HepG2 (cell line): ENCODE measurements at regions of chr1 and their contacts with region 1.

Region 1: DNA sequence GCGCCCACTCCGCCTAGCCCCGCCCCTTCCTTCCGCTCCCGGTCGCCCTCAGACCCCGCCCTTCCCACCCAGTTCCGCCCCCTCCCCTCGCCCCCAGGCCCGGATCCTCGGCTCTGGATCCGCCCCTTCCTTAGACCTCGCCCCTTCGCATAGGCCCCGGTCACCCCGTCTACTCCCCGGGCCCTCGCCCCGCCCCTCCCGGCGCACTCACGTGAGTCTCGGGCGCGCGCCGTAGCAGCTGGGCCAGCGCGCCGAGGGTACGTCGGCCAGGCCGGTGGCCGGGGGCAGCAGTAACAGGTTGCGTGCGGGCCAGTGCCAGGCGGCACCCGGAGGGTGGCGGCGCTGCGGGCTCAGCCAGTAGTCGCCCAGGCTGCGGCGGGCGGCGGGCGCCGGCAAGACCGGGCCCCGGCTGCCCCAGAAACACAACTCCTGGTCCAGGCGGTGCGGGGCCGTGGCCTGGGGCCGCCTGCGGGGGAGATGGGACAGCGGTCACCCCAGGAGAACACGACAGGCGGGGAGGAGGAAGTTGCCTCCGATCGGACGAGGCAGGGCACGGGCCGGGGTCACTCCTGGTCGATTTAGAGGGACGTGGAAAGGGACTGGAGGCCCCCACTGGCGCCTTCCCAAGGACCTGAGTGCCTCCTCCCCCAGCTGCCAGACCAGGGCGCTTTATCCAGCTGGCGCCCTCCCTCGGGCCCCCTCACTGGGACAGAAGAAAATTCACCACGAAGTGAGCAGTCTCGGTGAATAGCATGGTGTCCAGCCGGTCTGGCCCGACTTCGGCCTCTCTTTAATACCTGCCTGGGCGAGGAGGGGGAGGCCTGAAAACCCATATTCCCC is 10.7 kb downstream of the FAM229A start:
- DNase-seq: peak; percentile 89
- ATAC-seq: peak; percentile 80
- H3K4me3 ChIP-seq: peak overlapping the region; percentile 73 to 81 (median 74)
- H3K27ac ChIP-seq: peak overlapping the region; percentile 92
- H3K4me1 ChIP-seq: peaks cover 65% of the 10 kb centered on the region
- H3K27me3 ChIP-seq: no peaks in the 10 kb centered on the region
- CTCF ChIP-seq: peak; percentile 39
- EP300 ChIP-seq: no peak
- POLR2A ChIP-seq: peak; percentile 78 to 82
- RAD21 ChIP-seq: no peak; the same call in 1 of the 2 replicates

Region 2: DNA sequence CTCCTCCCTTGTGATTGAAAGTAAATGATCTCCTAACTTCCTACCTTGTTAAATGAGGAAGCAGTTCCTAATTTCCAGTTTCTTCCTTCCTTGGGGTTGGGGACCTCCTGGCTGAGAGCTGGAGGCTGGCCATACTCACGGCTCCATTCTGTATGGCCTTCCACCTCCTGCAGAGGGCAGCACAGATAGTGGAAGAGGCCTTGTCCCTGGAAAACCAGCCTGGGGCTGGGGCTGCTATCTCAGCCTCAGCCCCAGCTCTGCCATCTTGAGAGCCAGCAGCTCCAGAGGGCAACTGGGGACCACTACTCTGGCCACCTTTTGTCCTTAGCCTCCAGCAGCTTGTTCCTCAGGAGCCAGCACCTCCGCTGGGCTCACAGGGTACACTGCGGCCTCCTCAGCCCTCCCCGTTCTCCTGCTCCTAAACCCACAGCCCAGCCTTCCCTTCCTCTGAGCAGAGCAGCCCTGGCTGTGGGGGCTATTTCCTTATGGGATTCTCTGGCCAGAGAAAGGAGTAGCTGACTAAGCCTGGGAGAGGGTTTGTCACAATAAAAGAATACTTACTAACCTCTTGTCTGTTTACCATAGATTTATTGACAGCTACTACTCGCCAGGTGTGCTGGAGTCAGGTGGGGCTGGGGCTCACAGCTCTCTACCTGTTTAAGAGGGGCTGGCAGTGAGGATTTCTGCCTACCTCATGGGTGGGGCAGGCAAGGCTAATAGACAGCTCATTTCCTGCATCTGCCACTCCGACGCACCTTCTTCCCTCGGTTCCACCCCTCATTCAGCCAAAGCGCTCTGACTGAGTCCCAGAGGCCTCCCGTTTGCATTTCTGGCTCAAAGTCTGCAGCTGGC is 135.8 kb before region 1 on chr1:
- CTCF ChIA-PET with region 1: no interaction called
- POLR2A ChIA-PET with region 1: interaction called, 12 read pairs
- in situ Hi-C with region 1: no loop called
- intact Hi-C with region 1: no loop called
- DNase-seq: peak; percentile 61
- ATAC-seq: peak; percentile 95
- H3K4me3 ChIP-seq: no peak overlapping the region
- H3K27ac ChIP-seq: no peak overlapping the region
- H3K4me1 ChIP-seq: peaks cover 16% of the 10 kb centered on the region
- H3K27me3 ChIP-seq: no peaks in the 10 kb centered on the region
- CTCF ChIP-seq: peak; percentile 89
- EP300 ChIP-seq: no peak
- POLR2A ChIP-seq: no peak
- RAD21 ChIP-seq: peak; percentile 90

Region 3: GRCh38 chr1:32247983-32248889 is 103.4 kb before region 1 on chr1:
- CTCF ChIA-PET with region 1: no interaction called
- POLR2A ChIA-PET with region 1: interaction called, 13 read pairs
- in situ Hi-C with region 1: no loop called
- intact Hi-C with region 1: no loop called
- DNase-seq: peak; percentile 59
- ATAC-seq: peak; percentile 71
- H3K4me3 ChIP-seq: peak overlapping the region in 2 of 3 experiments; percentile 8 to 58; a peak in 2 of 6 replicates
- H3K27ac ChIP-seq: no peak overlapping the region
- H3K4me1 ChIP-seq: peaks cover 83% of the 10 kb centered on the region
- H3K27me3 ChIP-seq: no peaks in the 10 kb centered on the region
- CTCF ChIP-seq: peak; percentile 98
- EP300 ChIP-seq: no peak
- POLR2A ChIP-seq: no peak
- RAD21 ChIP-seq: peak; percentile 94

Region 4: DNA sequence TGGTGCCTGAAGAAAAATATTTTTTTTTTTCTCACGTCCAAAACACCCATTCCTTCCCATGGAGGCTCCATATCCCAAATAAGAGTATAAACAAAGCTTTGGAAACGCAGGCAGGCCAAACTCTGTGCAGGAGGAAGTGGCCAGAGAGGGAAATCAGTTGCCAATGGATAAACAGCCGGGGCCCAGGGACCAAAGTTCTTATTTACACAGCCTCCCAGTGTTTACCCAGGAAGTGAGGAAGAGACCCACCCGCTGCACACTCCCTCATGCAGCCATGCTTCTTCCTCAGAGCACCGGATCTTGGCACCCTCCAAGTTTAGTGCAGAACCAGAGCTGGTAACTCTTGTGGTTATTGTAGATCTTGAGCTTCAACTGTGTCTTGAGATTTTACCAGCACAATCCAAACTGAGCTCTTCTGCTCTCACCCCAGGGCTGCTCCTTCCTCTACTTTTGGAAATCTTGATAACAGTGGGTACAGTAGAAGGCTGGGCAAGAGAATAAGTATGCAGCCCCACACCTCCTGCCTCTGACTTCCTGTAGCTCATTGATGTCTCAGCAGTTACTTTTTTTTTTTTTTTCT is 29.8 kb before region 1 on chr1:
- CTCF ChIA-PET with region 1: no interaction called
- POLR2A ChIA-PET with region 1: interaction called, 31 read pairs
- in situ Hi-C with region 1: no loop called
- intact Hi-C with region 1: no loop called
- DNase-seq: peak; percentile 86
- ATAC-seq: peak; percentile 92
- H3K4me3 ChIP-seq: peak overlapping the region in 1 of 3 experiments; percentile 20; a peak in 1 of 6 replicates
- H3K27ac ChIP-seq: peak overlapping the region; percentile 77
- H3K4me1 ChIP-seq: peaks cover 49% of the 10 kb centered on the region
- H3K27me3 ChIP-seq: no peaks in the 10 kb centered on the region
- CTCF ChIP-seq: no peak
- EP300 ChIP-seq: peak in 1 of 2 experiments; percentile 89; a peak in 2 of 4 replicates
- POLR2A ChIP-seq: peak in 1 of 2 experiments; percentile 36; a peak in 1 of 4 replicates
- RAD21 ChIP-seq: no peak

Region 5: GRCh38 chr1:32361674-32362473 is 10.3 kb after region 1 on chr1:
- CTCF ChIA-PET with region 1: no interaction called
- POLR2A ChIA-PET with region 1: interaction called, 11 read pairs
- in situ Hi-C with region 1: no loop called
- intact Hi-C with region 1: no loop called
- DNase-seq: no peak
- ATAC-seq: no peak
- H3K4me3 ChIP-seq: no peak overlapping the region
- H3K27ac ChIP-seq: no peak overlapping the region
- H3K4me1 ChIP-seq: peaks cover 26% of the 10 kb centered on the region
- H3K27me3 ChIP-seq: no peaks in the 10 kb centered on the region
- CTCF ChIP-seq: no peak
- EP300 ChIP-seq: no peak
- POLR2A ChIP-seq: no peak
- RAD21 ChIP-seq: no peak

Region 6: GRCh38 chr1:32400876-32401631 is 49.4 kb after region 1 on chr1:
- CTCF ChIA-PET with region 1: no interaction called
- POLR2A ChIA-PET with region 1: no interaction called
- in situ Hi-C with region 1: no loop called
- intact Hi-C with region 1: no loop called
- DNase-seq: peak; percentile 66
- ATAC-seq: peak; percentile 97
- H3K4me3 ChIP-seq: peak overlapping the region; percentile 22 to 62 (median 46); a peak in 4 of 6 replicates
- H3K27ac ChIP-seq: no peak overlapping the region
- H3K4me1 ChIP-seq: peaks cover 13% of the 10 kb centered on the region
- H3K27me3 ChIP-seq: 0 out of 5 replicates have a peak, but pooled peaks cover 0 to 2% of the 10 kb centered on the region in 2 experiments
- CTCF ChIP-seq: peak; percentile 89
- EP300 ChIP-seq: no peak
- POLR2A ChIP-seq: no peak
- RAD21 ChIP-seq: peak; percentile 85

Region 7: DNA sequence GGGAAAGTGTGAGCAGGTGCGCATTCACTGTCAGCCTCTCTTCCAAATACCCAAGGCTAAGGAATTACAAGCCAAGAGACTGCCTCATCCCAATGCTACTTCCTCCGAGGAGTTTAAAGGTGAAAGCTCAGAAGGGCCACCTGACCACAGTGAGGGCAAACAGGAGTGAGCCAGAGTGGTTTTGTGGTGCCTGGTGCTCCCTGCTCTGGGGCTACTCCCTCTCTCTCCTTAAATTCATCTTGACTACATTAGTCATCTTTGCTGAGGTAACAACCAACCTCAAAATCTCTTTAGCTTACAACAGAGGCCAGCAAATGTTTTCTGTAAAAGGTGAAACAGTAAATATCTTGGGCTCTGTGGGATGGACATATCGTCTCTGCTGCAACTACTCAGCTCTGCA is 173.4 kb after region 1 on chr1:
- CTCF ChIA-PET with region 1: no interaction called
- POLR2A ChIA-PET with region 1: no interaction called
- in situ Hi-C with region 1: no loop called
- intact Hi-C with region 1: no loop called
- DNase-seq: no peak
- ATAC-seq: no peak
- H3K4me3 ChIP-seq: no peak overlapping the region
- H3K27ac ChIP-seq: no peak overlapping the region
- H3K4me1 ChIP-seq: peaks cover 21% of the 10 kb centered on the region; the same call in 1 of the 2 replicates
- H3K27me3 ChIP-seq: no peaks in the 10 kb centered on the region
- CTCF ChIP-seq: no peak
- EP300 ChIP-seq: no peak
- POLR2A ChIP-seq: no peak
- RAD21 ChIP-seq: no peak